Tibial artery (tissue), 4 donors: ENCODE measurements at regions of chr19 and their contacts with region 1.

Region 1: DNA sequence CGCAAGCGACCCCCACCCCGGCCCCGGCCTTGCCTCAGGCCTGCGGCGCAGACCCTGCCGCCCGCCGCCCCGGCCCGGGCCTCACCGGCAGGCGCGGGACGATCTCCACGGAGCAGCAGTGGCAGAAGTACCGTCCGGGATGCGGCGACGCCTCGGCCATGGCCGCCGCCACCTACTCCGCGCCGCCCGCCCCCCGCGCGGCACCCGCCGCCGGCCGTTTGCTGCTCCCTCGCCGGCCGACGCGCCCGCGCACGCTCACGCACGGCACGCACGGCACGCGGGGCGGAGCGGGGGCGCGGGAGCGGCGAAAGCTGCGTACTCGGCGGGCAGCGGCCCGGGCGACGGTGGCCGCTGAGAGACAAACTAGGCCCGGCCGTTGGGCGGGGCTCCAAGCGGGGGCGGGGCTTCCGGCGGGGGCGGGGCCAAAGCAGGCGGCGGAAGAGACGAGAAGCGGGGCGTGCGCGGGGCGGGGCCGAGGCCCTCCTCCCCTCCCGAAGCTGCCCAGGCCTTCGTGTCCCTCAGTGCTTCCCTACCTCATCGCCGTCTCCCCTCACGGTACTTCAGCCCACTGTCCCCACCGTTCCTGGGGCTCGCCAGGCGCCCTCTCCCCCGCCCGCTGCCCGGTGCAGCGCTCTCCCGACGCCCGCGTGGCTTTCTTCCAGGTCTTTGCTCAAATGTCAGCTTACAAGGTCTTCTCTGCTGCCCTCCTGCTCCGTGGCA is at the start of gene RNF126:
- DNase-seq: peak; percentile 87 to 97
- H3K4me3 ChIP-seq: peak within 1 kb of the TSS; percentile 79 to 88
- H3K27ac ChIP-seq: peak within 1 kb of the TSS; percentile 88 to 92
- H3K4me1 ChIP-seq: peaks cover 0 to 62% (median 56%) of the 10 kb centered on the region in 4 donors
- H3K27me3 ChIP-seq: no peaks in the 10 kb centered on the region
- CTCF ChIP-seq: peak in 1 of 2 experiments; percentile 14

Region 2: GRCh38 chr19:732148-733069 is 69.3 kb after region 1 on chr19:
- intact Hi-C with region 1: loop called (anchors 1 kb)
- DNase-seq: no peak
- H3K4me3 ChIP-seq: no peak overlapping the region
- H3K27ac ChIP-seq: no peak overlapping the region
- H3K4me1 ChIP-seq: no peaks in the 10 kb centered on the region
- H3K27me3 ChIP-seq: peaks cover 0 to 1% of the 10 kb centered on the region in 2 donors
- CTCF ChIP-seq: no peak

Region 3: DNA sequence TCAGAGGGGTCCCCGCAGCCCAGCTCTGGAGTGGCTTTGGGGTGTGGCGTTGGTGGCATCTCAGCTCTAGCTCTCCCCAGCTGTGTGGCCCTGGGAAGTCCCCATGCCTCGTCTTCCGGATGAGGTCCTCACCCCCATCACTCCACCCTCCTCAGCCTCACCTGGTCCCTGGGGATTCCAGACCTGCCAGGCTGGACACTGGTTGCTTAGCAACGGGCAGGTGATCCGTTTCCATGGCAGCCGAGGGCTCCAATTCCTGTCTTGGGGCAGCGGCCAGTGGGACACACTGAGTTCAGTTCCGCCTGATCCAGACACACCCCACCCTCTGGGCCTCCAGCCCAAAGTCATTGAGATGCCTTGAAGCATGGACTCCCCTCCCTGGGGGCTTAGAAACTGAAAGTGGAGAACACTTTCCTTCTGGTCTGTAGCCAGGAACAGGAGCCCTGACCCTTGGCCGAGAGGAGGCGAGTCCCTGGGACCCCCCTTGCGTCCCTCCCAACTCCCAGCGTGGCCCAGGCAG is 80.1 kb after region 1 on chr19:
- intact Hi-C with region 1: no loop called
- DNase-seq: no peak
- H3K4me3 ChIP-seq: no peak overlapping the region
- H3K27ac ChIP-seq: no peak overlapping the region
- H3K4me1 ChIP-seq: no peaks in the 10 kb centered on the region
- H3K27me3 ChIP-seq: peaks cover 0 to 21% of the 10 kb centered on the region in 2 donors
- CTCF ChIP-seq: no peak